PC-9 (cell line): ENCODE measurements at regions of chr7 and their contacts with region 1.

Region 1: DNA sequence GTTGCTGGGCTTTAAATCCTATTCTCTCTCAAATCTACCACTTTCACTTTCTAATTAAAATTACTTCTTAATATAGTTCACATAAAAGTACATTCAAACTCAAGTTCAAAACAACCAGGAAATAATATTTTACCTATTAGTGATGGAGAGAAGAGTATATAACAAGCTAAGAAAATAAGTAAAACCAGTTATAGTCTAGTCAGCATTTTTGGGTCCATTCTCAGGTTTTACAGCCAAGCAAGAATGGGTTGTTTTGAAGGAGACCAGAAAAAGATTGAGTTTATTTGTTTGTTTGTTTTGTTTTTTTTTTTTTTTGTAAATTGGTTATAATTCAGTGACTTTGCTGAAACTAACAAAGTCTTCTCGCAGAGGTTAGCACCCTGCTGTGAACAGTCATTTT is 106.3 kb upstream of the PTPRZ1 start:
- DNase-seq: no peak
- H3K4me3 ChIP-seq: no peak overlapping the region
- H3K27ac ChIP-seq: no peak overlapping the region
- H3K4me1 ChIP-seq: no peaks in the 10 kb centered on the region
- H3K27me3 ChIP-seq: no peaks in the 10 kb centered on the region
- CTCF ChIP-seq: no peak

Region 2: GRCh38 chr7:121379930-121380329 is 386.7 kb before region 1 on chr7:
- CTCF ChIA-PET with region 1: no interaction called
- POLR2A ChIA-PET with region 1: interaction called, 10 read pairs
- intact Hi-C with region 1: no loop called
- DNase-seq: no peak
- H3K4me3 ChIP-seq: no peak overlapping the region
- H3K27ac ChIP-seq: no peak overlapping the region
- H3K4me1 ChIP-seq: no peaks in the 10 kb centered on the region
- H3K27me3 ChIP-seq: no peaks in the 10 kb centered on the region
- CTCF ChIP-seq: no peak